Sigmoid colon (tissue), 7 donors: ENCODE measurements at regions of chr5 and their contacts with region 1.

Region 1: GRCh38 chr5:134411546-134412266 is at the start of gene CDKN2AIPNL:
- DNase-seq: peak; percentile 95
- H3K4me3 ChIP-seq: peak within 1 kb of the TSS; percentile 63 to 88 (median 79)
- H3K27ac ChIP-seq: peak within 1 kb of the TSS; percentile 80 to 87 (median 84)
- H3K4me1 ChIP-seq: peaks cover 0 to 27% (median 25%) of the 10 kb centered on the region in 4 donors
- H3K27me3 ChIP-seq: no peaks in the 10 kb centered on the region
- CTCF ChIP-seq: peak; percentile 56 to 81 (median 74)
- EP300 ChIP-seq: no peak
- POLR2A ChIP-seq: peak; percentile 22 to 46
- total RNA-seq, gene CDKN2AIPNL: 18.9 to 28.5 (median 21.3) TPM

Region 2: GRCh38 chr5:134427540-134428041 is 15.9 kb after region 1 on chr5:
- intact Hi-C with region 1: no loop called
- DNase-seq: no peak
- H3K4me3 ChIP-seq: no peak overlapping the region
- H3K27ac ChIP-seq: no peak overlapping the region
- H3K4me1 ChIP-seq: no peaks in the 10 kb centered on the region
- H3K27me3 ChIP-seq: no peaks in the 10 kb centered on the region
- CTCF ChIP-seq: no peak
- EP300 ChIP-seq: no peak
- POLR2A ChIP-seq: no peak

Region 3: DNA sequence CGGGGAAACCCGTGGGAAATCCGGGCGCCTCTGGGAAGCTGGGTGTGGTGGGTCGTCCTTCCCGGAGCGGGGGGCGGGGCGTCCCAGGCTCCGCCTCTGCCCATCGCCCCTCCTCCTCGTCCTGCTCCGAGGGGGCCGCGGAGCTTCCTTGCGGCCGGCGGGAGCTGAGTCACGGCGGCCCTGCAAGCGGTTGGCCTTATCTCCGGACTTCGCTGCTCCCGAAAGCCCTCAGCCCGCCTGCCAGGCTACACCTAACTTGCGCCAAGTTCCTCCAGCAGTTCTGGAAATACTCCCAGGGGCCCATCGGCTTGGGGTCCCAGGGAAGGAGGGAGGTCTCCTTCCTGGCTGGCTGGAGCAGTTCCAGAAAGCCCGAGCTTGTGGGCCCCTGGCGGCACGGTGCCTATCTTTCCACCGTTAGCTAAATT is 54.1 kb after region 1 on chr5:
- intact Hi-C with region 1: loop called (anchors 1 kb)
- DNase-seq: peak; percentile 96
- H3K4me3 ChIP-seq: peak overlapping the region; percentile 47 to 59 (median 55)
- H3K27ac ChIP-seq: peak overlapping the region; percentile 93 to 98 (median 96)
- H3K4me1 ChIP-seq: peaks cover 0 to 29% (median 22%) of the 10 kb centered on the region in 4 donors
- H3K27me3 ChIP-seq: no peaks in the 10 kb centered on the region
- CTCF ChIP-seq: no peak
- EP300 ChIP-seq: peak in 2 of 4 donors; percentile 4 to 51
- POLR2A ChIP-seq: peak; percentile 63 to 88

Region 4: GRCh38 chr5:134577796-134578363 is 166.2 kb after region 1 on chr5:
- intact Hi-C with region 1: loop called (anchors 2 kb)
- DNase-seq: peak; percentile 87
- H3K4me3 ChIP-seq: no peak overlapping the region
- H3K27ac ChIP-seq: peak overlapping the region in 1 of 4 donors; percentile 2
- H3K4me1 ChIP-seq: peaks cover 0 to 48% (median 39%) of the 10 kb centered on the region in 4 donors
- H3K27me3 ChIP-seq: no peaks in the 10 kb centered on the region
- CTCF ChIP-seq: peak; percentile 63 to 83 (median 78)
- EP300 ChIP-seq: no peak
- POLR2A ChIP-seq: no peak